Activated naive CD8-positive, alpha-beta T cell treated with anti-CD3 and anti-CD28 coated beads, Interleukin-2, amount 10 ng/mL, durations not matched to agents 7 days and 5 days (primary cell): ENCODE measurements at regions of chr22 and their contacts with region 1.

Region 1: GRCh38 chr22:35430897-35431322 is 31.0 kb downstream of the MCM5 start:
- DNase-seq: peak; percentile 72
- ATAC-seq: peak; percentile 59
- H3K4me3 Mint-ChIP-seq: no peak overlapping the region
- H3K27ac Mint-ChIP-seq: no peak overlapping the region
- H3K4me1 Mint-ChIP-seq: no peaks in the 10 kb centered on the region
- H3K27me3 Mint-ChIP-seq: no peaks in the 10 kb centered on the region

Region 2: GRCh38 chr22:35479985-35480550 is 49.2 kb after region 1 on chr22:
- POLR2A ChIA-PET with region 1: interaction called, 13 read pairs
- DNase-seq: no peak
- ATAC-seq: no peak
- H3K4me3 Mint-ChIP-seq: no peak overlapping the region
- H3K27ac Mint-ChIP-seq: no peak overlapping the region
- H3K4me1 Mint-ChIP-seq: peaks cover 10% of the 10 kb centered on the region
- H3K27me3 Mint-ChIP-seq: peaks cover 13% of the 10 kb centered on the region

Region 3: GRCh38 chr22:35950262-35950661 is 519.4 kb after region 1 on chr22:
- POLR2A ChIA-PET with region 1: no interaction called
- DNase-seq: no peak
- ATAC-seq: no peak
- H3K4me3 Mint-ChIP-seq: no peak overlapping the region
- H3K27ac Mint-ChIP-seq: no peak overlapping the region
- H3K4me1 Mint-ChIP-seq: no peaks in the 10 kb centered on the region
- H3K27me3 Mint-ChIP-seq: peaks cover 3% of the 10 kb centered on the region